ENCODE measurements at regions of chr1 and their contacts with region 1.

Region 1: DNA sequence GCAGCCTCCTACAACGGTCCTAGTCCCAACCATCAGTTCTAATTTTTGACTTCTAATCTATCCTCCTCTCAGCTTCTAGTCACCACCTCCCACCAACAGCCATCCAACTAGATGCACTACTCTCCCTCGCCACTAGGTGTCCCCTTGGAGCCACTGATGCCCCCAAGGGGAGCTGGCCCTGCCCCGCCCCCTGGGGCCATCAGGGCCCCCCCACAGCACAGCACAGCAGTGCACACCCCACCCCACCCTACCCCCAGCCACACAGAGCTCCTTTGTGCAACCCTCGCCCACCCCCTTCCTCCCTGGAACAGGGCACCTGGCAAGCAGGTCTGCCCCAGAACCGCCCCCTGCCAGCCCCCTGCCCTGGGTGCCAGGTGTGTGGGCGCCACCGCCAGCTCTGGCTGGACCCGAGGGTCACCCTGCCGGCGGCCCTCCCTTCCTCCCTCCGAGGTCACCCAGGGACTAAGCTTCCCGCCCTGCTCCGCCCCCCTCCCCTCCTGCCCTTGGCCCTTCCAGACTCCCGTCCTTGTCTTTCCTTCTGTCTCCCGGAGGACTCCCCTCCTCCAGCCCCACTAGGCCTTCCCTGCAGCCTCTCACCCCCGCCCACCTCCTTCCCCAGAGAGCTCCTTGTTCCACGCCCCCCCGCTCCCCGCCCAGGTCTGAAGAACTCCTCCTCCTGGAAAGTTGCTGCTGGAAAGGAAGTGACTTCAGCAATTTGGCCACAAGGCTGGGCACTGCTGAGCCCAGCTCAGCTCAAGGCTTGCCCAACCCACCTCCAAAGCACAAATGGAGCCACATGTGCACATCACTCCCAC is 47.0 kb downstream of the AHDC1 start:
- DNase-seq: peak; percentile 76 to 91
- H3K4me3 ChIP-seq: peak overlapping the region; percentile 6; the same call in 1 of the 2 replicates
- H3K4me3 Mint-ChIP-seq: peak overlapping the region; percentile 3
- H3K27ac Mint-ChIP-seq: peak overlapping the region; percentile 53
- H3K4me1 ChIP-seq: peaks cover 16% of the 10 kb centered on the region
- H3K4me1 Mint-ChIP-seq: peaks cover 28% of the 10 kb centered on the region
- H3K27me3 ChIP-seq: no peaks in the 10 kb centered on the region
- H3K27me3 Mint-ChIP-seq: no peaks in the 10 kb centered on the region
- CTCF ChIP-seq: peak; percentile 84

Region 2: DNA sequence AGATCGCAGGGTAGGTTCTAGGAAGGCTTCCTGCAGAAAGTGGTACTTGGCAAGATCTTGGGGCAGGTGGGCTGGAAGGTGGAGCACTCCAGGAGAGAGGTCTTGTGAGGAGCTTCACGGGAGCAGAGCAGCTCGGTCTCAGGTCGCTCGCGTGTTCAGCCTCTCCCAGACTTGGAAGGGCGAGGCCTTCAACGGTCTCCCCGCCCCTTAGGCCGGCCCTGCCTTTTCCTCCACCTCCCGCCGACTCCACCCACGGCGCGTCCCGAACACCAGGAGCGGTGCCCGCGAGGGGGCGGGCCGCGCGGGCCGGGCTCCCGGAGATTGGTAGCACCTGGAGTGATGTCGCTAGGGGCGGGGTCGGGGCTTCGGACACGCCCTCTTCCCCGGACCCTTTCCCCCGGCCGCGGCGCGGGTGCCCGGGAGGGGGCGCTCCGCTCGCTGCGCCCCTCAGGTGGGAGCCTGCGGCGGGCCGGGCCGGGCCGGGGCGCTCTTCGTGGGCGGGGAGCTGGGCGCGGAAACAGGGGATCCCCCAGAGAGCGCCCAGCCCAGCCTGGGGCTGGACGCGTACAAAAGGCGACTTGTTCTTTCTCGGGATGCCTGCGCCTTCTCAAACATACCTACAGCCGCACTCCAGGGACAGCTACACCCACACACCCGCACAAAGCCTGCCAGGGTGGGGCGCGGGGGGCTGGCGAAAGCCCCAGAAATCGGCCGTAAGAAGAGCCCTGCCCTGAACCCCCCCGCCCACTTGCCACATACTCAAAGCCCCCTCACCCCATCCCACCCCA is 11.5 kb after region 1 on chr1:
- CTCF ChIA-PET with region 1: interaction called, 29 read pairs
- POLR2A ChIA-PET with region 1: interaction called, 6 read pairs
- intact Hi-C with region 1: no loop called
- DNase-seq: peak; percentile 95 to 96
- H3K4me3 ChIP-seq: peak overlapping the region; percentile 24
- H3K4me3 Mint-ChIP-seq: peak overlapping the region; percentile 68
- H3K27ac Mint-ChIP-seq: peak overlapping the region; percentile 50
- H3K4me1 ChIP-seq: peaks cover 74% of the 10 kb centered on the region
- H3K4me1 Mint-ChIP-seq: peaks cover 65% of the 10 kb centered on the region
- H3K27me3 ChIP-seq: no peaks in the 10 kb centered on the region
- H3K27me3 Mint-ChIP-seq: no peaks in the 10 kb centered on the region
- CTCF ChIP-seq: peak; percentile 52 to 68

Region 3: GRCh38 chr1:27574871-27575831 is 18.2 kb after region 1 on chr1:
- CTCF ChIA-PET with region 1: interaction called, 37 read pairs
- POLR2A ChIA-PET with region 1: interaction called, 6 read pairs
- intact Hi-C with region 1: loop called (anchors 1 kb)
- DNase-seq: peak; percentile 86 to 87
- H3K4me3 ChIP-seq: peak overlapping the region; percentile 53
- H3K4me3 Mint-ChIP-seq: peak overlapping the region; percentile 67
- H3K27ac Mint-ChIP-seq: peak overlapping the region; percentile 92
- H3K4me1 ChIP-seq: peaks cover 52% of the 10 kb centered on the region
- H3K4me1 Mint-ChIP-seq: peaks cover 38% of the 10 kb centered on the region
- H3K27me3 ChIP-seq: no peaks in the 10 kb centered on the region
- H3K27me3 Mint-ChIP-seq: no peaks in the 10 kb centered on the region
- CTCF ChIP-seq: peak; percentile 25 to 37